A549 (cell line): ENCODE measurements at regions of chr2 and their contacts with region 1.

Region 1: DNA sequence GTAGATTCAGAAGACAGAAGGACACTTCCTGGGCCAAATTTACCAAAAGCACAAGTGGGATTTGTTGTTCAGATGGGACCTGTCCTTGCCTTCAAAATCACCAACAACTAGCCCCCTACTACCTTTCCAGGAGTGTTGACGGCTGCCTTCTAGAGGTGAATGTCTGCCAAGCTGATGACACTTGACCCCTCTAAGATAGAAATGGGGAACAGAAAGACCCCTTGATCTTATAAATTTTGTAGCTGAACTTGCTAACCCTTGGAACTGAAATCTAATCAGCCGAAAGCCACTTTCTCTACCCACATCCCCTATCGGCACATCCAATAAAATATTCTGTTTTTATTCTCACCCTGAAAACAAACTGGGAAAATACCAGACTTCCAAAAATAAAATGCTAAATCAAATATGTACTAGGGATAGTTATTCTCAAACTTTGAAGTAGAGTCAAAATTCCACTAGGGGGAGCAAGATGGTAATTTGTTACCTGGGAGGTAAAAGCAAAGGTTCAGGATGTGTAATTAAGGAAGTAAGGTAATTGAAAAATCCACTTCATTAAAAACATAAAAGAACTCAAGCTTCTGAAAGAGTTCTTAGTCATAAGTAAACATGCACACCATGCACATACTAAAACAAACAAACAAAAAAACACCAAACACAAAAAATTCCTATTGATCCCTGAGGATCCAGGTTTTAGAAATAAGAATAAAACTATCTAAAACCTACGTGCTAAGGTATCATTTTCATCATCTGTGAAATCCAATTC is 119.2 kb downstream of the ANKRD44 start:
- DNase-seq: peak; percentile 38 to 44
- ATAC-seq: peak in 1 of 2 experiments; percentile 78; a peak in 4 of 6 replicates
- H3K4me3 ChIP-seq: no peak overlapping the region
- H3K27ac ChIP-seq: no peak overlapping the region
- H3K4me1 ChIP-seq: no peaks in the 10 kb centered on the region
- CTCF ChIP-seq: peak; percentile 86
- EP300 ChIP-seq: no peak
- POLR2A ChIP-seq: no peak
- RAD21 ChIP-seq: peak; percentile 83

Region 2: GRCh38 chr2:196739031-196739430 is 452.3 kb before region 1 on chr2:
- CTCF ChIA-PET with region 1: no interaction called
- POLR2A ChIA-PET with region 1: no interaction called
- DNase-seq: no peak
- ATAC-seq: no peak
- H3K4me3 ChIP-seq: no peak overlapping the region
- H3K27ac ChIP-seq: no peak overlapping the region
- H3K4me1 ChIP-seq: no peaks in the 10 kb centered on the region
- CTCF ChIP-seq: no peak
- EP300 ChIP-seq: no peak
- POLR2A ChIP-seq: no peak
- RAD21 ChIP-seq: no peak

Region 3: DNA sequence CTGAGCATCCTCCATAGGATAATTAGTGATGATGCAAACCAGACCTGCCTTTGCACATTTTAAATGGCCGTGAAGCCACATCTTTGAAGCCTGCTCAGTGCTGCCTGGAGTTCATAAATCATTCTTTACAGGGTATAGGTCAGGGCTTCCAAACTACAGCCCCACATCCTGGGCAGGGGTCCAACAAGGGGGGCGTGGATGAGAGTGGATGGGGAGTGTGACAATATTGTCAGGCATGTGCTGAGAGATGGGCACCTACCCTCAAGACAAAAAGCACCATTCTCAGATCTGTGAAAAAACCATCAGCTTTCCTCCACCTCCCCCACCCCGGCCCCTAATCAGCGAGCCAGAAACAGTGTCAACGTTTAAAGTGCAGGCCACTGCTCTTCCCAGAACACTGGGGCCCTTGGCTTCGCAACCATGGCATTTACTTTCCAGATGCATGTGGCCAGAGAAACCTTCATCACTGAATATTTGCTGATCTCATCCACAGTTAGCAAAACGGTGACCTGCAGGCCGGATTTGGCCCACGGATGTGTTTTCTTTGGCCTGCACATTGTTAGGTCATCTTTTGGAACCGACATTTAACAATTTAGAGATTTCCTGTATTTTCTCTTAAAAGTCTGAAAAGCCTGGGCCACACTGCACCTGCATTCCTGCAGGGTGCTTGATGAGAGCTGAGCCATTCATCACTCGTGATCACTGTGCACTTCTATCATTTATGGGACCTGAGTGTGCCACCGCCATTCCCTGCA is 11.4 kb before region 1 on chr2:
- CTCF ChIA-PET with region 1: interaction called, 10 read pairs
- POLR2A ChIA-PET with region 1: no interaction called
- DNase-seq: peak in 1 of 2 experiments; percentile 11
- ATAC-seq: no peak
- H3K4me3 ChIP-seq: no peak overlapping the region
- H3K27ac ChIP-seq: 0 out of 6 replicates have a peak overlapping the region, but pooled peaks of 1 of the 2 experiments have one; percentile 3
- H3K4me1 ChIP-seq: 0 out of 3 replicates have a peak, but pooled peaks cover 4% of the 10 kb centered on the region
- CTCF ChIP-seq: no peak
- EP300 ChIP-seq: no peak
- POLR2A ChIP-seq: no peak
- RAD21 ChIP-seq: no peak

Region 4: GRCh38 chr2:197201874-197202273 is 10.5 kb after region 1 on chr2:
- CTCF ChIA-PET with region 1: interaction called, 17 read pairs
- POLR2A ChIA-PET with region 1: no interaction called
- DNase-seq: no peak
- ATAC-seq: no peak
- H3K4me3 ChIP-seq: no peak overlapping the region
- H3K27ac ChIP-seq: no peak overlapping the region
- H3K4me1 ChIP-seq: no peaks in the 10 kb centered on the region
- CTCF ChIP-seq: no peak
- EP300 ChIP-seq: no peak
- POLR2A ChIP-seq: no peak
- RAD21 ChIP-seq: no peak

Region 5: DNA sequence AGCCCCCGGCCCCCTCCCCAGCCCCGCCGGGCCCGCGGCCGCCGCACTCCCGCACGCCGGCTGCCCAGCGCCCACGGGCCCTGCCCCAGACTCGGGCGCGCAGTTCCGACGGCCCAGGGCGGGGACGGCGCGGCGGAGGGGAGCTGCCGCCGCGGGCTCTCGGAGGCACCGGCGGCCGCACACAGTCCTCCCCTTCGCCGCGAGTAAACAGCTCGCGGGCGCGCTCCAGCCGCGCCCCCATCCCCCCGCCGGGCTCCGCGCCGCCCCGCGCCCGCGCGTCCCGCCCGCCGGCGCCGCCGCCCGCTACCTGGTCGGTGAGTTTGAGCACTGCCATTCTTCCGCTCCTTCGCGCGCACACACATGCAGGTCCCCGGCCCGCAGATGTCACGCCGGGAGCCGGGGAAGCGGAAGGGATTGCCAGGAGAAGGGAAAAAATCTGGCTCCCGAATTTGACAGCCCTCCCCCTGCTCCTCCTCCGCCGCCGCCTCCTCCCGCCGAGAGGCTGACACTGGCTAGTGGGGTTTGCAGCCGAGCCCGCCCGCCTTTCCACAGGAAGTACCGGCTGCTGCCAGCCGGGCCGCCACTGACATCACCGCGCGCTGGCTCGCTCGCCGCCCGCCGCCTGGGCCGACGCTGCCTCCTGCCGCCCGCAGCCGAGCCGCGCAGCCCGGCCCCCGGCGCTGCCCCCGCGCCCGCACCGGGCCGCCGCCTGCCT is 119.1 kb after region 1 on chr2 and contains the start of gene ANKRD44:
- CTCF ChIA-PET with region 1: interaction called, 43 read pairs
- POLR2A ChIA-PET with region 1: no interaction called
- DNase-seq: peak; percentile 76 to 83
- ATAC-seq: peak; percentile 97 to 99
- H3K4me3 ChIP-seq: peak within 1 kb of the TSS; percentile 97
- H3K27ac ChIP-seq: peak within 1 kb of the TSS; percentile 83 to 85
- H3K4me1 ChIP-seq: peaks cover 8% of the 10 kb centered on the region; the same call in 2 of the 3 replicates
- CTCF ChIP-seq: peak; percentile 66
- EP300 ChIP-seq: no peak
- POLR2A ChIP-seq: peak; percentile 29; the same call in 1 of the 2 replicates
- RAD21 ChIP-seq: peak; percentile 54 to 71
- polyA plus RNA-seq, gene ANKRD44: 5.9 and 7.9 TPM in 2 replicates

Region 6: GRCh38 chr2:197378494-197379307 is 187.3 kb after region 1 on chr2:
- CTCF ChIA-PET with region 1: interaction called, 16 read pairs
- POLR2A ChIA-PET with region 1: no interaction called
- DNase-seq: peak; percentile 44 to 52
- ATAC-seq: peak; percentile 81 to 86
- H3K4me3 ChIP-seq: peak overlapping the region; percentile 24; the same call in 1 of the 3 replicates
- H3K27ac ChIP-seq: no peak overlapping the region
- H3K4me1 ChIP-seq: no peaks in the 10 kb centered on the region
- CTCF ChIP-seq: peak; percentile 93
- EP300 ChIP-seq: no peak
- POLR2A ChIP-seq: no peak
- RAD21 ChIP-seq: peak; percentile 96 to 97